PC-9 (cell line): ENCODE measurements at regions of chr11 and their contacts with region 1.

Region 1: GRCh38 chr11:19259487-19260345 is 19.0 kb upstream of the E2F8 start:
- DNase-seq: peak; percentile 49 to 73
- H3K4me3 ChIP-seq: no peak overlapping the region
- H3K27ac ChIP-seq: no peak overlapping the region
- H3K4me1 ChIP-seq: no peaks in the 10 kb centered on the region
- H3K27me3 ChIP-seq: no peaks in the 10 kb centered on the region
- CTCF ChIP-seq: peak; percentile 99

Region 2: GRCh38 chr11:19311308-19312030 is 51.8 kb after region 1 on chr11:
- CTCF ChIA-PET with region 1: no interaction called
- POLR2A ChIA-PET with region 1: no interaction called
- intact Hi-C with region 1: loop called (anchors 1 kb)
- DNase-seq: peak in 1 of 2 experiments; percentile 63
- H3K4me3 ChIP-seq: no peak overlapping the region
- H3K27ac ChIP-seq: no peak overlapping the region
- H3K4me1 ChIP-seq: no peaks in the 10 kb centered on the region; the same call in 1 of the 2 replicates
- H3K27me3 ChIP-seq: no peaks in the 10 kb centered on the region
- CTCF ChIP-seq: peak; percentile 94

Region 3: GRCh38 chr11:19868281-19868821 is 608.6 kb after region 1 on chr11:
- CTCF ChIA-PET with region 1: no interaction called
- POLR2A ChIA-PET with region 1: no interaction called
- intact Hi-C with region 1: no loop called
- DNase-seq: peak in 1 of 2 experiments; percentile 47
- H3K4me3 ChIP-seq: no peak overlapping the region
- H3K27ac ChIP-seq: no peak overlapping the region
- H3K4me1 ChIP-seq: no peaks in the 10 kb centered on the region
- H3K27me3 ChIP-seq: no peaks in the 10 kb centered on the region
- CTCF ChIP-seq: no peak